ENCODE measurements at regions of chr3 and their contacts with region 1.

Region 1: GRCh38 chr3:139427283-139427993 is 38.0 kb upstream of the COPB2 start:
- DNase-seq: no peak
- H3K4me3 ChIP-seq: no peak overlapping the region
- H3K27ac ChIP-seq: no peak overlapping the region
- H3K4me1 ChIP-seq: peaks cover 0 to 6% (median 0%) of the 10 kb centered on the region in 4 donors
- H3K27me3 ChIP-seq: no peaks in the 10 kb centered on the region
- CTCF ChIP-seq: peak; percentile 76 to 85 (median 83)
- EP300 ChIP-seq: no peak
- POLR2A ChIP-seq: no peak

Region 2: DNA sequence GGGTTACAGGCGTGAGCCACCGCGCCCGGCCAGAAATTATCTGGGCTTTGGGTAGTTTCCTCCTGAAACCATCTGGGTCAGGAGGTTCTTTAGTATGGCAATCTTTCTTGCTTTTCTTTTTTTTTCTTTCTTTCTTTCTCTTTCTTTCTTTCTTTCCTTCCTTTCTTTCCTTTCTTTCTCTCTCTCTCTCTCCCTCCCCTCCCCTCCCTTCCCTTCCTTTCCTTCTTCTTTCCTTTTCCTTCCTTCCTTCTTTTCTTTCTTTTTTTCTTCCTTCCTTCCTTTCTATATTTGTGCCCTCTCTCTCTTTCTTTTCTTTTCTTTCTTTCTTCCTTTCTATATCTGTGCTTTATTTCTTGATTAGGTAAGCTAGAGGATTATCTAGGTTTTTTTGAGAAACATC is 1269.7 kb before region 1 on chr3:
- in situ Hi-C with region 1: no loop called
- intact Hi-C with region 1: no loop called
- DNase-seq: no peak
- H3K4me3 ChIP-seq: no peak overlapping the region
- H3K27ac ChIP-seq: no peak overlapping the region
- H3K4me1 ChIP-seq: no peaks in the 10 kb centered on the region
- H3K27me3 ChIP-seq: no peaks in the 10 kb centered on the region
- CTCF ChIP-seq: no peak
- EP300 ChIP-seq: no peak
- POLR2A ChIP-seq: no peak

Region 3: GRCh38 chr3:139561959-139562676 is 134.7 kb after region 1 on chr3:
- in situ Hi-C with region 1: loop called in 2 of 4 experiments (anchors 10 kb)
- intact Hi-C with region 1: no loop called
- DNase-seq: peak; percentile 27
- H3K4me3 ChIP-seq: no peak overlapping the region
- H3K27ac ChIP-seq: no peak overlapping the region
- H3K4me1 ChIP-seq: no peaks in the 10 kb centered on the region
- H3K27me3 ChIP-seq: no peaks in the 10 kb centered on the region
- CTCF ChIP-seq: peak; percentile 38 to 68 (median 55)
- EP300 ChIP-seq: no peak
- POLR2A ChIP-seq: no peak

Region 4: GRCh38 chr3:139811331-139811730 is 383.9 kb after region 1 on chr3:
- in situ Hi-C with region 1: no loop called
- intact Hi-C with region 1: no loop called
- DNase-seq: no peak
- H3K4me3 ChIP-seq: no peak overlapping the region
- H3K27ac ChIP-seq: no peak overlapping the region
- H3K4me1 ChIP-seq: no peaks in the 10 kb centered on the region
- H3K27me3 ChIP-seq: no peaks in the 10 kb centered on the region
- CTCF ChIP-seq: no peak
- EP300 ChIP-seq: no peak
- POLR2A ChIP-seq: no peak

Region 5: GRCh38 chr3:139846729-139847128 is 419.3 kb after region 1 on chr3:
- in situ Hi-C with region 1: no loop called
- intact Hi-C with region 1: no loop called
- DNase-seq: no peak
- H3K4me3 ChIP-seq: no peak overlapping the region
- H3K27ac ChIP-seq: no peak overlapping the region
- H3K4me1 ChIP-seq: no peaks in the 10 kb centered on the region
- H3K27me3 ChIP-seq: no peaks in the 10 kb centered on the region
- CTCF ChIP-seq: no peak
- EP300 ChIP-seq: no peak
- POLR2A ChIP-seq: no peak

Region 6: GRCh38 chr3:139935016-139935865 is 507.8 kb after region 1 on chr3 and contains the start of gene CLSTN2:
- in situ Hi-C with region 1: loop called in 1 of 4 experiments (anchors 10 kb)
- intact Hi-C with region 1: no loop called
- DNase-seq: peak; percentile 27
- H3K4me3 ChIP-seq: peak within 1 kb of the TSS; percentile 4 to 52 (median 30)
- H3K27ac ChIP-seq: no peak within 1 kb of the TSS
- H3K4me1 ChIP-seq: peaks cover 12 to 24% (median 17%) of the 10 kb centered on the region in 4 donors
- H3K27me3 ChIP-seq: peaks cover 43% of the 10 kb centered on the region
- CTCF ChIP-seq: no peak
- EP300 ChIP-seq: no peak
- POLR2A ChIP-seq: no peak
- total RNA-seq, gene CLSTN2: 0.60 to 9.0 (median 2.2) TPM

Region 7: GRCh38 chr3:140736863-140737460 is 1309.5 kb after region 1 on chr3:
- in situ Hi-C with region 1: no loop called
- intact Hi-C with region 1: loop called (anchors 5 kb)
- DNase-seq: peak; percentile 18
- H3K4me3 ChIP-seq: no peak overlapping the region
- H3K27ac ChIP-seq: no peak overlapping the region
- H3K4me1 ChIP-seq: no peaks in the 10 kb centered on the region
- H3K27me3 ChIP-seq: no peaks in the 10 kb centered on the region
- CTCF ChIP-seq: peak in 4 of 5 experiments; percentile 22 to 36 (median 26)
- EP300 ChIP-seq: no peak
- POLR2A ChIP-seq: no peak

Region 8: DNA sequence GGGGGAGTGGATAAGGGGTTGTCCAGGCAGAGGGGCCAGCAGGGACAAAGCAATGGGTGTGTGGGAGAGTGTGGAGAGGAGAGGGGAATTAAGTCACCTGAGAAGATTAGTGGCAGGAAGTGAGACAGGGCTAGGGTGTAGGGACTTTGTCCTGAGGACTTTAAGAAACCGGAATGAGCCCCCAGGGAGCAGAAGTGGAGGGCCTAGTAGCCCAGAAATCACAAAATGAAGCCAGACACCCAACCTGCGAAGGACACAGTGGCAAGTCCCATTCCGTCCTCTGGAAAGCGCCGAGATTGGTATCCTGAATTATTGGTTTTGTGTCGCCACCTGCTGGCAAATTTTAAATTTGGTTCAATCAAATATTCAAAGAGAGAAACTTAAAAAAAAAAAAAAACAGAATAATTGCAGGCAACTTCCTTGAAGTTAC is 1436.2 kb after region 1 on chr3:
- in situ Hi-C with region 1: loop called in 2 of 4 experiments (anchors 25 kb)
- intact Hi-C with region 1: no loop called
- DNase-seq: peak; percentile 42
- H3K4me3 ChIP-seq: no peak overlapping the region
- H3K27ac ChIP-seq: no peak overlapping the region
- H3K4me1 ChIP-seq: no peaks in the 10 kb centered on the region
- H3K27me3 ChIP-seq: no peaks in the 10 kb centered on the region
- CTCF ChIP-seq: peak; percentile 38 to 54 (median 44)
- EP300 ChIP-seq: no peak
- POLR2A ChIP-seq: no peak